Mammary epithelial cell (primary cell): ENCODE measurements at regions of chr16 and their contacts with region 1.

Region 1: DNA sequence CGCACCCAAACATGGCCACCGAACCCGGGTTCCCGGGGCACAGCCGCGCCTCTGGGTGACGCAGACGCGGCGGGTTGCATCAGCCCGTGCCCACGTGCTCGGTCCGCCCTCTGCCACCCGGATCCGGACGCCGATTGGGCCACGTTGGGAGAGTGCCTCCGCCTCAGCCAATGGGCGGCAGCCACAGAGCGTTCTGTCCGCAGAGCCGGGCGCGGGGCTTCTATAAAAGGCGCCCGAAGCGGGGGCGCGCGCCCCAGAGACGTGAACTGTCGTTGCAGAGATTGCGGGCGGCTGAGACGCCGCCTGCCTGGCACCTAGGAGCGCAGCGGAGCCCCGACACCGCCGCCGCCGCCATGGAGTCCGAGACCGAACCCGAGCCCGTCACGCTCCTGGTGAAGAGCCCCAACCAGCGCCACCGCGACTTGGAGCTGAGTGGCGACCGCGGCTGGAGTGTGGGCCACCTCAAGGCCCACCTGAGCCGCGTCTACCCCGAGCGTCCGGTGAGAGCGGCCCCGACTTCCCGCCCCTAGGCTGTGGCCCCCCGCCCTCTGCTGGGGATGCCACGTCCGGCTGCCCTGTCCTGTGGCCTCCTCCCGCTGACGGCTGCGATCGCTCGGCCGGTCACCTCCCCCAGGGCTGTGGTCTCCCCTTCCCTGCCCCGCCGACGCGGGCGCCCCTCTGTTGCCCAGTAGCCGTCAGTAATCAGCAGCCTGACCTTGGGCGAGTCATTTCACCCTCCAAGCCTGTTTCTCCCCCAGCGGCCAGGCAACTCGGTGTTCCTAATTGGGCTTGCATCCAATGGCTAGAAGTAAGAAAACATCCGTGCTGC is at the start of gene HERPUD1:
- DNase-seq: peak; percentile 97
- H3K4me3 ChIP-seq: peak within 1 kb of the TSS; percentile 81 to 90 (median 85)
- H3K27ac ChIP-seq: peak within 1 kb of the TSS; percentile 91
- H3K4me1 ChIP-seq: peaks cover 17% of the 10 kb centered on the region
- H3K27me3 ChIP-seq: no peaks in the 10 kb centered on the region
- CTCF ChIP-seq: peak in 1 of 2 donors; percentile 16
- total RNA-seq, gene HERPUD1: 166 to 239 TPM

Region 2: GRCh38 chr16:56866943-56867830 is 64.9 kb before region 1 on chr16:
- CTCF ChIA-PET with region 1: no interaction called
- dilution Hi-C with region 1: no loop called
- in situ Hi-C with region 1: loop called in 1 of 2 experiments (anchors 5 kb)
- intact Hi-C with region 1: loop called (anchors 1 kb)
- DNase-seq: peak; percentile 19
- H3K4me3 ChIP-seq: no peak overlapping the region
- H3K27ac ChIP-seq: no peak overlapping the region
- H3K4me1 ChIP-seq: no peaks in the 10 kb centered on the region
- H3K27me3 ChIP-seq: no peaks in the 10 kb centered on the region
- CTCF ChIP-seq: peak; percentile 63 to 72

Region 3: DNA sequence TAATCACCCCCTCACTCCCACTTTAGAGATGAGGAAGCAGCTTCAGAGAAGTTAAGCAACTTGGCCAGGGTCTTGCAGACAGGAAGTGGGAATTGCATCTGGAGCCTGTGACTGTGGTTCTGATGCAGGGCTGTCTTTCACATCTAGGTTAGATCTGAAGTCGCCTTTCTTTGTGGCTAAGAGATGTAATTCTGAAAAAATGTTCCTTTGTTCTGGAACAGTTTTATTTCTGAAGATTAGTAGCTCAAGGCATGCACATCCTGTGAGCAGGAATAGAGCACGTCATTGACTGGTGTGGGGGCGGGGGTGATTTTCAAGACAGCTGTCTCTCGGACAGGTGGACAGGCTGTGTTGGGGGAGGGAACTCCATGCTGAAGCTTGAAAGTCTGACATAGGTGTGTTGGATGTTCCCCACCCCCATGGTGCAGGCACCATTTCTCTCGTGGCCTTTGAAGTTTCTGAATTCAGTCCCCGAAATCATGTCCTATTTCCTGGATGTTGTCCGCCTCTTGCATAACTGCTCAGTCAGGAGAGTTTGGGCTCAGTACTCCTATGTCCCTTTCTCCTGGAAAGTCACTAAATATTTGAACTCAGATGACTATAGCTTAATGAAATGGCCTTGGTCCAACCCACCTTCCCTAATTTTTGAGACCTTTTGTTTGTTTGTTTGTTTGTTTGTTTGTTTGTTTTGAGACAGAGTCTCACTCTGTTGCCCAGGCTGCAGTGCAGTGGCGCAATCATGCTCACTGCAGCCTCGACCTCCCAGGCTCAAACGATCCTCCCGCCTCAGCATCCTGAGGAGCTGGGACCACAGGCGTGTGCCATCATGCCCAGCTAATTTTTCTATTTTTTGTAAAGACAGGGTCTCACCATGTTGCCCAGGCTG is 21.2 kb before region 1 on chr16:
- CTCF ChIA-PET with region 1: no interaction called
- dilution Hi-C with region 1: no loop called
- in situ Hi-C with region 1: no loop called
- intact Hi-C with region 1: loop called (anchors 1 kb)
- DNase-seq: peak; percentile 65
- H3K4me3 ChIP-seq: no peak overlapping the region
- H3K27ac ChIP-seq: no peak overlapping the region
- H3K4me1 ChIP-seq: peaks cover 41% of the 10 kb centered on the region
- H3K27me3 ChIP-seq: no peaks in the 10 kb centered on the region
- CTCF ChIP-seq: no peak